ENCODE measurements at regions of chr14 and their contacts with region 1.

Region 1: GRCh38 chr14:52824507-52824906 is 33.1 kb upstream of the GNPNAT1 start:
- DNase-seq: no peak
- ATAC-seq: peak; percentile 54
- H3K4me3 ChIP-seq: no peak overlapping the region
- H3K27ac ChIP-seq: no peak overlapping the region
- H3K4me1 ChIP-seq: peaks cover 5% of the 10 kb centered on the region
- H3K27me3 ChIP-seq: no peaks in the 10 kb centered on the region
- CTCF ChIP-seq: no peak
- EP300 ChIP-seq: no peak
- POLR2A ChIP-seq: no peak
- RAD21 ChIP-seq: no peak

Region 2: DNA sequence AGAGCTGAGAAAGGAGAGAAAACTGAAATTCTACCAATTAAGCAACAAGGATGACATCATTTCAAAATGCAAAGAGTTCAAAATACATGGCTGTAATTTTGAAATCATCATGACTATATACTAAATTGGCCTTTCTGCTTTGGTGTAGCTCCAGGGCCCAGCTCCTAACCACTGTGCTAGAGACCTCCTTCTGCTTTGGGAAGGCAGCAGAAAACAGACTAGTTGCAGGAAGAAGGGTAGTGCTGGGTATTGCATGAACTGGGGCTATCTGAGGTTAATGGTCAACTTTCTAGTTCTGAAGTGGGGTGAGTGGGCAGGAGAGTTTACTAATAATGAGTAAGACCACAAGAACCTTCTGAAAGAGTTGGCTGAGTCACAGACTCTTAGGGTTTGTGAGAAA is 444.2 kb before region 1 on chr14:
- CTCF ChIA-PET with region 1: no interaction called
- POLR2A ChIA-PET with region 1: no interaction called
- RAD21 ChIA-PET with region 1: no interaction called
- SMC1A ChIA-PET with region 1: no interaction called
- in situ Hi-C with region 1: no loop called
- intact Hi-C with region 1: no loop called
- DNase-seq: peak; percentile 25
- ATAC-seq: peak; percentile 97
- H3K4me3 ChIP-seq: no peak overlapping the region
- H3K27ac ChIP-seq: no peak overlapping the region
- H3K4me1 ChIP-seq: no peaks in the 10 kb centered on the region; the same call in 1 of the 2 replicates
- H3K27me3 ChIP-seq: no peaks in the 10 kb centered on the region; a peak in 1 of 4 replicates
- CTCF ChIP-seq: no peak
- EP300 ChIP-seq: no peak
- POLR2A ChIP-seq: no peak
- RAD21 ChIP-seq: no peak

Region 3: DNA sequence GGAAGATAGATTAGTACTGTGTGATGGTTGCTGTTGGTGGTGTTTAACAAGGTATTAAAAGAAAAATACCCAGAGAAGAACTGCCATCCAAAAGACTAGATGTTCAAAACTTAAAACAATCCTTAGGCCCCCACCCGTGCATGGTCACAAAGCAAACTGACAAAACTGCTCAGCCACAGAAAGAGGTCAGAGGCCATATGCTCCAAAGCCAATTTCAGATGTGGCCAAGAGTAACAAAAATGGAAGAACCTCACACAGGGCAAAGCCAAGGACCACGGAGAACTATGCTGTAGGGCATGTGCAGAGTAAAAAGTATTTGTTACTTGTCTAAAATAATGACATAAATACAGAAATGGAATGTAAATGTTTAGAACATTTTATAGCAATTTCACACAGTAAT is 277.5 kb before region 1 on chr14:
- CTCF ChIA-PET with region 1: no interaction called
- POLR2A ChIA-PET with region 1: no interaction called
- RAD21 ChIA-PET with region 1: no interaction called
- SMC1A ChIA-PET with region 1: no interaction called
- in situ Hi-C with region 1: no loop called
- intact Hi-C with region 1: no loop called
- DNase-seq: no peak
- ATAC-seq: no peak
- H3K4me3 ChIP-seq: no peak overlapping the region
- H3K27ac ChIP-seq: no peak overlapping the region
- H3K4me1 ChIP-seq: peaks cover 8% of the 10 kb centered on the region
- H3K27me3 ChIP-seq: no peaks in the 10 kb centered on the region
- CTCF ChIP-seq: no peak
- EP300 ChIP-seq: no peak
- POLR2A ChIP-seq: no peak
- RAD21 ChIP-seq: no peak

Region 4: DNA sequence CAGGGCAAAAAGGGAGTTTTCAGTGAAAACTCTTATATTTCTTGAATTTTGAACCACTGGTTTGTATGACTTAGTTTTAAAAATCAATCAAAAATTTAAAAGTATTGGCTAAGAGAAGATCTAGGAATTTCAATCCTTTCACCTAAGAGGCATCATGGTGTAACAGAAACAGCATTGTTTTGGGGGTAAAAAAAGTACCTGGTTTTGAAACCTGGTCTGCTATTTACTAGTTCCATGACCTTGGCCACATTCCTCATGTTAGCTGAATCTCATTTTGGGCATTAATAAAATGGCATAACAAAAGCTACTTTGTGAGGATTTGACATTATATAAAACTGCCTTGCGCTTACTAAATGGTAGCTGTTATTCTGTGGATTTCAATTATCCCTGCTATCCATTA is 16.4 kb before region 1 on chr14:
- CTCF ChIA-PET with region 1: interaction called, 11 read pairs
- POLR2A ChIA-PET with region 1: no interaction called
- RAD21 ChIA-PET with region 1: no interaction called
- SMC1A ChIA-PET with region 1: interaction called, 7 read pairs
- in situ Hi-C with region 1: no loop called
- intact Hi-C with region 1: no loop called
- DNase-seq: no peak
- ATAC-seq: no peak
- H3K4me3 ChIP-seq: no peak overlapping the region
- H3K27ac ChIP-seq: no peak overlapping the region
- H3K4me1 ChIP-seq: no peaks in the 10 kb centered on the region
- H3K27me3 ChIP-seq: no peaks in the 10 kb centered on the region
- CTCF ChIP-seq: no peak
- EP300 ChIP-seq: no peak
- POLR2A ChIP-seq: no peak
- RAD21 ChIP-seq: no peak

Region 5: DNA sequence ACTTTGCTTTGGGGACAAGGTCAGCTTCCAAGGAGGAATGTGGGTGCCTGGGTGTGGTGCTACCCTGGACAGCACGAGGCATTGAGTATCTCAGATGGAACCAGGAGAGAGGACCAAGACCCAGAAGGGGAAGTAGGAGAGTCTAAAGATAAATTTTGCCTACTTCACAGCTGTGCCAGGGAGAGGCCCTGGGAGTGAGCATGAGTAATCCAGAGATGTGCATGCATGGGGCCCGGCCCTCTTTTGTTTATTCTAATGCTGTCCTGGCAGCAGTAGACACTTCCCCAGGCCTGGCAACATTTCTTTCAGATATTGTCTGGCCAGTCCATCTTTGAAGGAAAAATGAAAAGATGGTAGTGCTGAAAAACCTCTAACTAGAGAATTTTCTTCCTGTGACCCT is 16.4 kb after region 1 on chr14:
- CTCF ChIA-PET with region 1: interaction called, 14 read pairs
- POLR2A ChIA-PET with region 1: no interaction called
- RAD21 ChIA-PET with region 1: interaction called, 4 read pairs
- SMC1A ChIA-PET with region 1: interaction called, 17 read pairs
- in situ Hi-C with region 1: no loop called
- intact Hi-C with region 1: no loop called
- DNase-seq: no peak
- ATAC-seq: peak; percentile 64
- H3K4me3 ChIP-seq: no peak overlapping the region
- H3K27ac ChIP-seq: no peak overlapping the region
- H3K4me1 ChIP-seq: no peaks in the 10 kb centered on the region
- H3K27me3 ChIP-seq: no peaks in the 10 kb centered on the region
- CTCF ChIP-seq: no peak
- EP300 ChIP-seq: no peak
- POLR2A ChIP-seq: no peak
- RAD21 ChIP-seq: no peak

Region 6: GRCh38 chr14:52873065-52873464 is 48.6 kb after region 1 on chr14:
- CTCF ChIA-PET with region 1: no interaction called
- POLR2A ChIA-PET with region 1: no interaction called
- RAD21 ChIA-PET with region 1: no interaction called
- SMC1A ChIA-PET with region 1: no interaction called
- in situ Hi-C with region 1: no loop called
- intact Hi-C with region 1: no loop called
- DNase-seq: no peak
- ATAC-seq: no peak
- H3K4me3 ChIP-seq: no peak overlapping the region
- H3K27ac ChIP-seq: no peak overlapping the region
- H3K4me1 ChIP-seq: no peaks in the 10 kb centered on the region
- H3K27me3 ChIP-seq: no peaks in the 10 kb centered on the region
- CTCF ChIP-seq: no peak
- EP300 ChIP-seq: no peak
- POLR2A ChIP-seq: no peak
- RAD21 ChIP-seq: no peak

Region 7: GRCh38 chr14:52950898-52951689 is 126.6 kb after region 1 on chr14 and contains the start of gene FERMT2:
- CTCF ChIA-PET with region 1: interaction called, 4 read pairs
- POLR2A ChIA-PET with region 1: no interaction called
- RAD21 ChIA-PET with region 1: interaction called, 6 read pairs
- SMC1A ChIA-PET with region 1: interaction called, 11 read pairs
- in situ Hi-C with region 1: no loop called
- intact Hi-C with region 1: no loop called
- DNase-seq: no peak
- ATAC-seq: peak; percentile 79
- H3K4me3 ChIP-seq: peak within 1 kb of the TSS; percentile 69
- H3K27ac ChIP-seq: no peak within 1 kb of the TSS
- H3K4me1 ChIP-seq: peaks cover 3% of the 10 kb centered on the region; the same call in 1 of the 2 replicates
- H3K27me3 ChIP-seq: peaks cover 1 to 18% of the 10 kb centered on the region in 2 experiments
- CTCF ChIP-seq: no peak
- EP300 ChIP-seq: no peak
- POLR2A ChIP-seq: no peak; the same call in 1 of the 2 replicates
- RAD21 ChIP-seq: no peak
- polyA plus RNA-seq, gene FERMT2: 4.9 to 8.6 TPM

Region 8: DNA sequence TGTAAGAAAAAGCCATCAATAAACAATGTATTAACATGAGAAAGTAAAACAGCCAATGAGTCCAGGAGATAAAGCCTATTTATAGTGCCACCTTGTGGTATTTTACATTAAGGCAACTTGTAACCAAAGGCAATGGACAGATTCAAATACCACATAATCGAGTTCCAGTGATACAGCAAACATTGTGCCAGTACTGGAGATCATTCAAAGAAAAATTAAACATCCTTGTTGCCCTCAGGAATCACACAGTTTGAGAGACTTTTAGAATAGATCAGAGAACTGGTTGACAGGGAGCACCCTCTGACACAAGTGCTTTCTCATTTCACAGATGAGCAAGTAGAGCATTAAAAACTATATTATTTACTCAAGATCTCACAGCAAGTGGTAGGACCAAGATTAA is 230.5 kb after region 1 on chr14:
- CTCF ChIA-PET with region 1: interaction called, 23 read pairs
- POLR2A ChIA-PET with region 1: no interaction called
- RAD21 ChIA-PET with region 1: interaction called, 5 read pairs
- SMC1A ChIA-PET with region 1: interaction called, 26 read pairs
- in situ Hi-C with region 1: no loop called
- intact Hi-C with region 1: loop called (anchors 1 kb)
- DNase-seq: peak; percentile 15
- ATAC-seq: peak; percentile 90
- H3K4me3 ChIP-seq: no peak overlapping the region
- H3K27ac ChIP-seq: no peak overlapping the region
- H3K4me1 ChIP-seq: no peaks in the 10 kb centered on the region
- H3K27me3 ChIP-seq: no peaks in the 10 kb centered on the region
- CTCF ChIP-seq: peak; percentile 53 to 69 (median 67); a peak in 5 of 6 replicates
- EP300 ChIP-seq: no peak
- POLR2A ChIP-seq: no peak
- RAD21 ChIP-seq: peak; percentile 66

Region 9: GRCh38 chr14:53306267-53306721 is 481.8 kb after region 1 on chr14:
- CTCF ChIA-PET with region 1: interaction called, 25 read pairs
- POLR2A ChIA-PET with region 1: no interaction called
- RAD21 ChIA-PET with region 1: interaction called, 13 read pairs
- SMC1A ChIA-PET with region 1: interaction called, 17 read pairs
- in situ Hi-C with region 1: loop called (anchors 5 kb)
- intact Hi-C with region 1: loop called (anchors 2 kb)
- DNase-seq: no peak
- ATAC-seq: peak; percentile 77
- H3K4me3 ChIP-seq: peak overlapping the region; percentile 74; the same call in 1 of the 2 replicates
- H3K27ac ChIP-seq: no peak overlapping the region
- H3K4me1 ChIP-seq: peaks cover 6% of the 10 kb centered on the region
- H3K27me3 ChIP-seq: no peaks in the 10 kb centered on the region
- CTCF ChIP-seq: peak; percentile 67 to 80 (median 69); a peak in 5 of 6 replicates
- EP300 ChIP-seq: no peak
- POLR2A ChIP-seq: no peak
- RAD21 ChIP-seq: peak; percentile 93

Measured in GM12878 (cell line).